ENCODE measurements at regions of chr7 and their contacts with region 1.

Region 1: DNA sequence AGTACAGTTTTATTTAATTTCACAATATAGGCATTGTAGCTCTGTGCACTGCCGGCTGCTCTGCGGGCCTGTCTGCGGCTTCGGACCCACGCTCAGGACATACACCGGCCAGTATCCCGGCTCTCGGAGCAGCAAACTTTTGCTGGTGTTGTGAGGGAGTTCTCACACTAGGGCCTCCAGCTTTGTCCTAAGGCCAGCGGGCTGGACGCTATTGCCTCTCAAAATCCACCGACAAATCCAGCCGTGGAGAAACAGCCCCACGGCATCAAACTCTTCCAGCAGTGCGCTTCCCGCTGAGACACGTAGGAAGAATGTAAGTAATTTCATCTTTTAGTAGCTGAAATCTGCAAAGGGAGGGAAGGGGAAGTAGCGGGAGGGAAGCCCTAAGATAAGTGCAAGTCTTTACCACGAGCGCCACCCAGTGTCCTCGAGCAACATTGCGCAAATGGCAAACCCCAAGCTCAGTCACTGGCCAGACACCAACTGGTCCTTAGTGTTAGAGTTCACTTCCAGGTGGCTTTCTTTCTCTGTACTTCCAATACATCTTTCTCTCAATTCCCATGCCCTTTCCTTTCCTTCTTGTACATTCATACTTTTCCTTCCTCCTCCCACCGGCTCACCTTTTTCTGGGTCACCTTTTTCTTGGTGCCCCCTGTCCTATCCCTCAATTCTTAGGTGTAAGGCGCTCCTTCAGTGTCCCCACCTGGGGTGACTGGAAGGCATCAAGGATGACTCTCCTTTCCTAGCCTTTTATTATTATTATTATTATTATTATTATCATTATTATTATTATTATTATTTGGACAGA is 3.0 kb upstream of the DLX5 start:
- DNase-seq: peak; percentile 91
- H3K4me3 ChIP-seq: peak overlapping the region; percentile 40
- H3K27ac ChIP-seq: peak overlapping the region; percentile 62
- H3K4me1 ChIP-seq: peaks cover 25% of the 10 kb centered on the region
- H3K27me3 ChIP-seq: peaks cover 3% of the 10 kb centered on the region
- CTCF ChIP-seq: peak; percentile 93

Region 2: GRCh38 chr7:95723592-95724180 is 1303.9 kb before region 1 on chr7:
- CTCF ChIA-PET with region 1: no interaction called
- POLR2A ChIA-PET with region 1: no interaction called
- intact Hi-C with region 1: loop called (anchors 2 kb)
- DNase-seq: peak; percentile 81
- H3K4me3 ChIP-seq: no peak overlapping the region
- H3K27ac ChIP-seq: no peak overlapping the region
- H3K4me1 ChIP-seq: peaks cover 10% of the 10 kb centered on the region
- H3K27me3 ChIP-seq: no peaks in the 10 kb centered on the region
- CTCF ChIP-seq: peak; percentile 70

Region 3: DNA sequence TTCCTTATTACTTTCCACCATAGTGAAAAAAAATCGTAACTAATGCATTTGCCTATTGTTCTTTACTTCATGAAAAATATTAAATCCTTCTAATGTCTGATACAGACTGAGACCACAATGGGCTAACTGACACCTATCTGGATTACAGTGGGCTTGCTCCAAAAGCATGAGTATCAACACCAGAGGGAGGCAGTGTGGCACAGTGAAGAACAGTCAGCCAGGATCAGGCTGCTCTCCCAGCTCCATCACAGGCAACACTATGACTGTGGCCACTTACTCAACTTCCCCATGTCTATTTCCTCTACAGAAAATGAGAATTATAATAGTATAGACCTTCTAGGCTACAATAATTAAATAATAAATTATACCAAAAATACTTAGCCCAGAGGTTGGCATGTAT is 802.9 kb before region 1 on chr7:
- CTCF ChIA-PET with region 1: no interaction called
- POLR2A ChIA-PET with region 1: no interaction called
- intact Hi-C with region 1: loop called (anchors 10 kb)
- DNase-seq: peak; percentile 47
- H3K4me3 ChIP-seq: no peak overlapping the region
- H3K27ac ChIP-seq: no peak overlapping the region
- H3K4me1 ChIP-seq: no peaks in the 10 kb centered on the region
- H3K27me3 ChIP-seq: no peaks in the 10 kb centered on the region
- CTCF ChIP-seq: peak; percentile 68

Region 4: DNA sequence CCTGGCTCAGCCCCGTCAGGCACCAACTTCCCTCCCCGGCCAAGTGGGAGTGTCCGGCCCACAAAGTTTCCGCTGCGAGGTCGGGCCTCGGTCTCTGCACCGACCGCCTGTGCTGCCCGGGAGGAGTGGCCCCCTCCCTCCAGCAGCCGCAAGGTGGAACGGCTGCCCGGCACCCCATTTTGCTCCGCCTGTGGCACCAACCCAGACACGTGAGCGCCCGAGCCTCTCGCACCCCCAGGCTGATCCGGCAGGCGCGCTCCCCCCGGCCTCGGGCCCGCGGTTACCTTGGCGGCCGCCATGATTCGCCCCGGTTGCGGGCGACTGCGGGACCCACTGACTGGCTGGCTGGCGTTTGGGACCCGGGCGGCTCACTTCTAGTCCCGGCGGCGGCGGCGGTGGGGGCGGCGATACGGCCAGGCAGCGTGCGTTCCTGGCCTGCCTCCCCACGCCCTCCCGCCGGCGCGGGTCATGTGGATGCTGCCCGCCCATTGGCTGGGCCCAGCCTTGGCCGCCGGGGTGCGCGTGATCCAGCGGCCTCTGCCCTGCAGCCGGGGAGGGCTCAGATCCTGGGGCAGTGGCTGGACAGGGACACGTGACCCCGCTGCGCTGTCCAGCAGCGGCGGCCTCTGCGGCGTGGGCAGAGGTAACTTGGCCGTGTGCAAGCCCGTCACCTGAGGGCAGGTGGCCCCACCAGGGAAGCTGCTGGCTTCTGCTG is 705.8 kb before region 1 on chr7 and contains the start of gene SLC25A13:
- CTCF ChIA-PET with region 1: no interaction called
- POLR2A ChIA-PET with region 1: no interaction called
- intact Hi-C with region 1: loop called (anchors 5 kb)
- DNase-seq: peak; percentile 63
- H3K4me3 ChIP-seq: peak within 1 kb of the TSS; percentile 80
- H3K27ac ChIP-seq: peak within 1 kb of the TSS; percentile 94
- H3K4me1 ChIP-seq: peaks cover 4% of the 10 kb centered on the region
- H3K27me3 ChIP-seq: no peaks in the 10 kb centered on the region
- CTCF ChIP-seq: no peak
- total RNA-seq, gene SLC25A13: 22.7 and 24.9 TPM in 2 replicates

Region 5: GRCh38 chr7:96414931-96415292 is 612.7 kb before region 1 on chr7:
- CTCF ChIA-PET with region 1: interaction called, 4 read pairs
- POLR2A ChIA-PET with region 1: no interaction called
- intact Hi-C with region 1: loop called (anchors 2 kb)
- DNase-seq: peak; percentile 80
- H3K4me3 ChIP-seq: no peak overlapping the region
- H3K27ac ChIP-seq: peak overlapping the region; percentile 44
- H3K4me1 ChIP-seq: peaks cover 29% of the 10 kb centered on the region
- H3K27me3 ChIP-seq: no peaks in the 10 kb centered on the region
- CTCF ChIP-seq: peak; percentile 85

Measured in A673 (cell line).